IMR-90 (cell line): ENCODE measurements at regions of chr7 and their contacts with region 1.

Region 1: GRCh38 chr7:80134536-80135320 is at the start of gene GNAI1:
- DNase-seq: peak; percentile 74
- ATAC-seq: peak; percentile 85
- H3K4me3 ChIP-seq: peak within 1 kb of the TSS; percentile 98
- H3K27ac ChIP-seq: peak within 1 kb of the TSS; percentile 90
- H3K4me1 ChIP-seq: peaks cover 8% of the 10 kb centered on the region
- H3K27me3 ChIP-seq: no peaks in the 10 kb centered on the region
- CTCF ChIP-seq: peak; percentile 64
- POLR2A ChIP-seq: peak; percentile 66
- RAD21 ChIP-seq: peak; percentile 65
- total RNA-seq, gene GNAI1: 26.5 and 44.2 TPM in 2 replicates

Region 2: DNA sequence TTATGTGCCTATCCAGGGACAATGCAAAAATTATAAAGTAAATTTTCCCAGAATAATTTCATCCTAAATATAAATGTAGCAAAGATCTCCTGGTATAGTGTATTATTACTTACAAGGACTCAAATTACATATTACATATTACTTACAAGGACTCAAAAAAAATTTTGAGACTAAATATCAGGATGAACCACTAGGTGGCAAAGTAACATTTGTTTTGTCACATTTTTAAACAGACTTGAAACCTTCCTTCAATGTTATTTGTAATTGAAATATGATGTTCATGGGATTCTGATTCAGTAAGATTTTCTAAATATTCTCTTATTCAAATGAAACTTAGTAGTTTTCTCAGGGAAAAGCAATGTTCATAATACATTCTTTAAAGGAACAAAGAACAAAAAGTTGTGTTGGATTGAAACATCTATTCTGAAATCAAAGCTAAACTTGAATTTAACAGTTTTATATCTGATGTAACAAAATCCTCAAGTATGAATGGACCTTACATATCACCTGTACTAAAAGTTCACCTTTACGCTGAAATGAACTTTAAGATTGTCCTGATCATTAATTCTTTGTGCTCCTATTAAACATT is 74.4 kb before region 1 on chr7:
- CTCF ChIA-PET with region 1: no interaction called
- POLR2A ChIA-PET with region 1: no interaction called
- dilution Hi-C with region 1: no loop called
- in situ Hi-C with region 1: no loop called
- intact Hi-C with region 1: loop called (anchors 2 kb)
- DNase-seq: peak; percentile 82
- ATAC-seq: peak; percentile 59; the same call in 1 of the 2 replicates
- H3K4me3 ChIP-seq: no peak overlapping the region
- H3K27ac ChIP-seq: no peak overlapping the region
- H3K4me1 ChIP-seq: peaks cover 2% of the 10 kb centered on the region; the same call in 1 of the 2 replicates
- H3K27me3 ChIP-seq: no peaks in the 10 kb centered on the region
- CTCF ChIP-seq: peak; percentile 65
- POLR2A ChIP-seq: no peak
- RAD21 ChIP-seq: peak; percentile 60

Region 3: GRCh38 chr7:80151274-80151665 is 16.5 kb after region 1 on chr7:
- CTCF ChIA-PET with region 1: interaction called, 3 read pairs
- POLR2A ChIA-PET with region 1: no interaction called
- dilution Hi-C with region 1: no loop called
- in situ Hi-C with region 1: no loop called
- intact Hi-C with region 1: loop called (anchors 1 kb)
- DNase-seq: peak; percentile 57
- ATAC-seq: peak; percentile 20; the same call in 1 of the 2 replicates
- H3K4me3 ChIP-seq: no peak overlapping the region
- H3K27ac ChIP-seq: no peak overlapping the region
- H3K4me1 ChIP-seq: peaks cover 20% of the 10 kb centered on the region
- H3K27me3 ChIP-seq: no peaks in the 10 kb centered on the region
- CTCF ChIP-seq: no peak
- POLR2A ChIP-seq: no peak
- RAD21 ChIP-seq: no peak

Region 4: GRCh38 chr7:80277434-80278427 is 143.0 kb after region 1 on chr7:
- CTCF ChIA-PET with region 1: interaction called, 4 read pairs
- POLR2A ChIA-PET with region 1: interaction called, 3 read pairs
- dilution Hi-C with region 1: no loop called
- in situ Hi-C with region 1: no loop called
- intact Hi-C with region 1: loop called (anchors 2 kb)
- DNase-seq: peak; percentile 32
- ATAC-seq: peak; percentile 79
- H3K4me3 ChIP-seq: no peak overlapping the region
- H3K27ac ChIP-seq: 0 out of 2 replicates have a peak overlapping the region, but pooled peaks have one; percentile 54
- H3K4me1 ChIP-seq: peaks cover 6% of the 10 kb centered on the region
- H3K27me3 ChIP-seq: no peaks in the 10 kb centered on the region
- CTCF ChIP-seq: no peak
- POLR2A ChIP-seq: no peak
- RAD21 ChIP-seq: no peak

Region 5: GRCh38 chr7:80453699-80454340 is 319.1 kb after region 1 on chr7:
- CTCF ChIA-PET with region 1: no interaction called
- POLR2A ChIA-PET with region 1: no interaction called
- dilution Hi-C with region 1: no loop called
- in situ Hi-C with region 1: no loop called
- intact Hi-C with region 1: loop called (anchors 2 kb)
- DNase-seq: peak; percentile 56
- ATAC-seq: peak; percentile 48; the same call in 1 of the 2 replicates
- H3K4me3 ChIP-seq: no peak overlapping the region
- H3K27ac ChIP-seq: no peak overlapping the region
- H3K4me1 ChIP-seq: peaks cover 7% of the 10 kb centered on the region; the same call in 1 of the 2 replicates
- H3K27me3 ChIP-seq: no peaks in the 10 kb centered on the region
- CTCF ChIP-seq: peak; percentile 59
- POLR2A ChIP-seq: no peak
- RAD21 ChIP-seq: peak; percentile 71